Cardiac septum (tissue), 1 donor: ENCODE measurements at regions of chr3 and their contacts with region 1.

Region 1: DNA sequence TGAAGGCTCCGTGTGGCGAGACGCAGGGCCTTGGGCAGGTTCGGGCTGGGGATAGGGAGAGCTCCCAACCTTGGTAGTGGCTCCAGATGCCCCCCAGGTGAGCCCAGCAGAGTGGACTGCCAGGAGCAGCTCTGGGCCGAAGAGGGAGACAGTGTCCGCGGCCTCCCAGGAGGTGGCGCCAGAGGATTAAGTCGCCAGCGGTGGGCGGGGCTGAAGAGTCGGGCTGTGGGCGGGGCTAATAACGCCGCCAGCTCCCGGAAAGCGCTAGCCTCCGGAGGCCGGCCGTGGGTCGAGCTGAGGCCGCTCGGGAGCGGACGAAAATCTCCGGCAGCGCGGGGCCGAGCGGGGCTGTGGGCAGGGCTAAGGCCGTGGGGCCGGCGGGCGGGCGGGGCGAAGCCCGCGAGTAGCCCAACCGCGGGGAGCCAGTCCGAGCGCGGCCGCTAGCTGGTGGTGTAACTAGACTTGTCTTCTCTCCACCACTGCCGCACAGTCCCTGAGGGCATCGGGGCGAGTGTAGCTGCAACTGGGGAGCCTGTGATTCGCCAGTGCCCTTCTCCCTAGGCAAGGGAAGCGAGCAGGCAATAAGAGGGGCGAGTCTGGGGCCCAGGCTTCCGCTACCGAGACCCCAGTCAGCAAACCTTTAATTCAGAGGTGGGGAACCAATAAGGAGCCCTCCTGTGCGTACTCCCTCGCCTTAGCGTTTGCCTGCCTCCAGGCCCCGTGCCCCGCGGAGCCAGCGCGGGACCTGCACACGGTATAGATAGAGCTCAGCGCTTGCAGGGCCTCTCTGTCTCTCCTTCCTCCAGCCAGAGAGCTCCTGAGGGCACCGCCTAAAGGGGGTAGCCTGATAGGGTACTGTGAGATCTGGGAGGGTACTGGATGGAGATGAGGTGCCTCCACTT is 14.4 kb upstream of the BSN start:
- DNase-seq: peak; percentile 98

Region 2: GRCh38 chr3:49566312-49566711 is 26.4 kb after region 1 on chr3:
- intact Hi-C with region 1: no loop called
- DNase-seq: no peak

Region 3: DNA sequence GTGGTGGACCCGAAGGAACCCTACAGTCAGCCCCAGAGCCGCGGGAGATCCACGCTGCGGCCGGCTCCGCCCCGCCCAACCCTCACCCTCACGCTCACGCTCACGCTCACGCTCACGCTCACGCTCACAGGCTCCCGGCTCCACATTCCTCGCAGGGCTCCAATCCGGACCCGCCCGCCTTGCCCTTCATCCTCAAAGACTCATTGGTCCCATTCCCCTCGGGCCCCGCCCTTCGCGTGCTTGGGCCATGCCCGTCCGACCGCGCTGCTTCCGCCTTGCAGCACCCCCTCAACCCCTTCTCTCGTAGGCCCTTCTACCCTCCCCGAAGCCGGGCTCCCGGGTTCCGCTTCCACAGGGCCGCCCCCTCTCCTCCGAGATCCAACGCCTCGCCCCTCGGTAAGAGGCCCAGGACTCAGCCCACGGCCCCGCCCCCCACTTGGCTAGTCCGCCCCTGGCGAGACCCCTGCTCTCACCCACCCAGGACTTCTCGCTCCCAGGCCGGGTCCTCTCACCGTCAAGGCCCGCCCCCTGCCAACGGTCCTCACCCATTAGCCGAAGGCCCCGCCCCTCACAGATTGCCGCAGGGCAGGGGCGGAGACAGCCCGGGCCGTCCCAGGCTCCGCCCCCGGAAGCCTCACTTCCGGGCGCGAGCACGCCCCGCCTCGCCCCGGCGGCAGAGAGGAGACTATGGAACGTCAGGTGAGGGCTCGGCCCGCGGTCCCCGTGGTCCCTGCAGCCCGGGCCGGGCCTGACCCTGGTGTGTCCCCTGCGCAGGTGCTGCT is 134.0 kb after region 1 on chr3 and contains the start of gene APEH:
- intact Hi-C with region 1: loop called (anchors 1 kb)
- DNase-seq: peak; percentile 97
- total RNA-seq, gene APEH: 81.4 TPM

Region 4: DNA sequence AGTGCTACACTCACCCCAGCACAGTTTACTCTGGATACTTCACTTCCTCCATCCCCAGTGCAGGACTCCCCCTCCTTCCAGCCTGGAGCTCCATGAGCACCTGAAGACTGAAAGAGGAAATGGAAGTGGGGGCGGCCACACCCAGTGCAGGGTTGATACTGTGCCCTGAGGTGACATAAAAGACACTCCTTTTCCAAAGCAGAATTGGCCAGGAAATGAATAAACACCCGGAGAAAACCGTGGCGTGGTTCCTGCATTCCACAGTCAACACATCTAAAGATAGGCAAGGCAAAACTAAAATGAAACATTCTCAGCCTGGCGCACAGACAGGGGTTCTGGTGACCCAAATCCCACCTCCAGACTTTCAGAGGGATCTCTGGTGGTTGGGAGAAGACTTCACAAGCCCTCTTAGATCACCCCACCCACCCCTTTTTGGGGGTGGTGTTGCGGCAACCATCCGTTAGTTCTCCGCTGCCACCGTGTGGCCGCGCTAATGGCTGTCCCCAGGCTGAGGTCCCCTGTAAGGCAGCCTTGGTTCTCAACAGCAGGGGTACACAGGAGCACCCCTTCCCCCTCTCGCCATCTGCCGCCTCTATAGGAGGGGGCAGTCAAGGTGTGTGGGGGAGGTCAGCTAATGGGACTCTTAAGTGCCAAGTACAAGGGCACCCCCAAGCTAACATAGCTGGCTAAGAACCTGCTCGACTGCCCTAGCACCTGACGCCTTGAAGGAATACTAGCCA is 366.3 kb after region 1 on chr3:
- intact Hi-C with region 1: loop called (anchors 10 kb)
- DNase-seq: no peak